ENCODE measurements at regions of chr17 and their contacts with region 1.

Region 1: GRCh38 chr17:75345514-75346167 is 56.4 kb upstream of the SLC25A19 start:
- DNase-seq: no peak
- H3K4me3 ChIP-seq: no peak overlapping the region
- H3K27ac ChIP-seq: no peak overlapping the region
- H3K4me1 ChIP-seq: peaks cover 0 to 29% (median 22%) of the 10 kb centered on the region in 3 donors
- H3K27me3 ChIP-seq: no peaks in the 10 kb centered on the region
- CTCF ChIP-seq: no peak

Region 2: GRCh38 chr17:75393523-75394331 is 48.1 kb after region 1 on chr17:
- intact Hi-C with region 1: loop called (anchors 10 kb)
- DNase-seq: peak; percentile 99
- H3K4me3 ChIP-seq: peak overlapping the region; percentile 72 to 92 (median 76)
- H3K27ac ChIP-seq: peak overlapping the region; percentile 82 to 85
- H3K4me1 ChIP-seq: peaks cover 0 to 21% (median 17%) of the 10 kb centered on the region in 3 donors
- H3K27me3 ChIP-seq: no peaks in the 10 kb centered on the region
- CTCF ChIP-seq: peak; percentile 25

Measured in kidney (tissue), 22 donors.